ENCODE measurements at regions of chr20 and their contacts with region 1.

Region 1: GRCh38 chr20:46558511-46558959 is 8.1 kb upstream of the OCSTAMP start:
- DNase-seq: peak; percentile 98
- ATAC-seq: peak; percentile 89
- H3K4me3 ChIP-seq: no peak overlapping the region
- H3K27ac ChIP-seq: no peak overlapping the region
- H3K4me1 ChIP-seq: peaks cover 3% of the 10 kb centered on the region; the same call in 1 of the 2 replicates
- H3K27me3 ChIP-seq: no peaks in the 10 kb centered on the region; the same call in 1 of the 2 replicates
- CTCF ChIP-seq: no peak
- POLR2A ChIP-seq: no peak
- RAD21 ChIP-seq: no peak

Region 2: DNA sequence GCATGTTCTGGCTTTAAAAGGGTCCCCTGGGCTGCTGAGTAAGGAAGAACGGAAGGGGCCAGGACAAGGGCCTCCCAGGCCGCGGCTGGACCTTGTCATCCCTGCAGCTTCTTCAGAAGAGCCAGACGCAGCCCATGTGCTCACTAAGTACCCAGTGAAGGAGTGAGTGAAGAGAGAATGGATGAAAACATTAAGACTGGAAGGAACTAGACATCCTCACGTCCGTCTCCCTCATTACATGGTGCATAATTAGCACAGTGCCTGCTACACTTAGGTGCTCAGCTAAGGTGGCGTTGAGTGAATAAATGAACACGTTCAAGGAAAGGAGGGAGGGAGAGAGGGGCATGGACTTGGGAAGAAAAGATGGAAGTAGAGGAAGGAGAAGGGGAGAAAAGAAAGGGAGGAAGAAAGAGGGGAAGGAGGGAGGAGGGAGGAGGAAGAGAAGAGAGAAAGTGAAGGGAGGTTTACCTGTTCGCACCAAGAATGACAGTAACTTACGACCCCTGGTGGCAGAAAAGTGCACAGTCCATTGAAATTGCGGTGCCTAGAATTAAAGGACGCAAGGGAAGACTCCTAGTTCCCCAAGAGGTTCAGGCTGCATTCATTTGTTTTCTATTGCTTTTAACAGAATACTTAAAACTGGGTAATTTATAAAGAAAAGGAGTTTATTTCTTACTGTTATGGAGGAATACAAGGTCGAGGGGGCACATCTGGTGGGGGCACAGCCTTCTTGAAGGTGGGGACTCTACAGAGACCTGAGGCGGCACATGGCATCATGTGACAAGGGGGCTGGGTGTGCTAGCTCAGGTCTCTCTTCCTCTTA is 122.7 kb after region 1 on chr20:
- CTCF ChIA-PET with region 1: no interaction called
- POLR2A ChIA-PET with region 1: no interaction called
- dilution Hi-C with region 1: no loop called
- in situ Hi-C with region 1: no loop called
- intact Hi-C with region 1: loop called (anchors 5 kb)
- DNase-seq: peak; percentile 44
- ATAC-seq: no peak
- H3K4me3 ChIP-seq: no peak overlapping the region
- H3K27ac ChIP-seq: no peak overlapping the region
- H3K4me1 ChIP-seq: peaks cover 10% of the 10 kb centered on the region
- H3K27me3 ChIP-seq: no peaks in the 10 kb centered on the region
- CTCF ChIP-seq: peak; percentile 72
- POLR2A ChIP-seq: no peak
- RAD21 ChIP-seq: peak; percentile 66

Measured in IMR-90 (cell line).